Calu3 (cell line): ENCODE measurements at regions of chr12 and their contacts with region 1.

Region 1: DNA sequence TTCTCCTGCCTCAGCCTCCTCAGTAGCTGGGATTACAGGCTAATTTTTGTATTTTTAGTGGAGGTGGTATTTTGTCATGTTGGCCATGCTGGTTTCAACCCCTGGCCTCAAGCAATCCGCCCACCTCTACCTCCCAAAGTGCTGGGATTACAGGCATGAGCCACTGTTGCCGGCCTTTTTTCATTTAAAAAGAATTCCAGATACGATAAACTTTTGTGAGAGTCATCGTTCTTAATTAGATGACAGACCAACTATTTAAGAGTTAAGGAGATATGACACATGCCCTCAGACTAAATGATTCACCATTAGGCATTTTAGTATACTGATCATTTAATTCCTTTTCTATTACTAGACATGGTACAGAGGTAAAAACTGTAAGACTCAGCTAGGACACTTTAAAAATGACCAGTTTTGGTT is 2.3 kb downstream of the ANKRD13A start:
- DNase-seq: no peak
- H3K4me3 Mint-ChIP-seq: no peak overlapping the region
- H3K27ac Mint-ChIP-seq: no peak overlapping the region
- H3K4me1 Mint-ChIP-seq: peaks cover 26% of the 10 kb centered on the region
- H3K27me3 Mint-ChIP-seq: no peaks in the 10 kb centered on the region
- CTCF ChIP-seq: no peak

Region 2: DNA sequence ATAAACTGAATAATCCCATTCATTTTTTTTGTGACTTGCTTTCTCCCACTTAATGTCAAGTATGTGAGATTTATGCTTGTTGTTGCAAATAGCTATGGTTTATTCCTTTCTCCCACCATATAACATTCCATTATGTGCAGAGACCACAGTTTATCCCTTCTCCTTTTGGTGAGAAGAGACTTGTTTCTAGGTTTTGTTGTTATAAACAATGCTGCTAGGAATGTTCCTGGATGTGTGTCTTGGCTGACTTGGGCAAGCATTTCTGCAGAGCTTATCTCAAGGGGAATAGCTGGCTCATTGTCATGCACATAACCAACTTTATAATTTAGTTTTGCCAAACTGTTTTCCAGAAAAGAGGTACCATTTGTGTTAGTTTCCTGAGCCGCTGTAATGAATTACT is 788.7 kb after region 1 on chr12:
- CTCF ChIA-PET with region 1: no interaction called
- intact Hi-C with region 1: no loop called
- DNase-seq: no peak
- H3K4me3 Mint-ChIP-seq: no peak overlapping the region
- H3K27ac Mint-ChIP-seq: no peak overlapping the region
- H3K4me1 Mint-ChIP-seq: peaks cover 11% of the 10 kb centered on the region
- H3K27me3 Mint-ChIP-seq: no peaks in the 10 kb centered on the region
- CTCF ChIP-seq: no peak

Region 3: DNA sequence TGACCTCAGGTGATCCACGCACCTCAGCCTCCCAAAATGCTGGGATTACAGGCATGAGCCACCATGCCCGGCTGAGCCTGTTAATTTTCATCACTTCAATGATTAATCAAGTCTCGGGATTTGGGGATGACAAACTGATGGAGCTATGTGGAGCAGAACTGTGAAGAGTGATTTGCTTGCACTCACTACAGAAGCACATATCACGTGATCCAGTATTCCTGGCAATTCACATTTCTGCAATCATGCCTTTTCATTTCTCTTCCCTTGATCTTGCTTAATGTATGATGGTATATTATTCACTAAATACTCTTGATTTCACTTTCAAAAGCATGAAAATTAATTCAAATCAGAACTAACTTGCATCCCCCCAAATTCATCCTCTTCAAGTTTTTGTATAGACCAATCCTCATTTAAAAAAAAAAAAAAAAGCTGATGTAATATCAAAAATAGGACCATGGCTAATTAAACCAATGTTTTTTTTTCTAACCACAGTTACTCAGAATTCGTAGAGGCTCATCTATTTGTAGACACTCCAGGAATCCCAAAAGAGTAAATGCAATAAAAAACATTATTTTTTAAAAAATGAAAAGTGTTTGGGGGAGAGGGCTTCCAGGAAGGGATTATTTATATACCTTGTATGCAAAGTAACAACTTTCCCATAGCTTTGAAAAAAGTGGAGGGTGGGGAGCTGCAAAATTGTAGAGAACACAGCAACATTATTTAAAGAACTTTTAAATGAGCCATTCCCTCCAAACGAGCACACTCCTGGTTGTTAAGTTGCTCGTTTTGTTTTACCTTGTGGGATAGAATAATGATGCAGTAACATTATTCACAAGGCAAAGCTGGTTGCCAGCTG is 1604.6 kb after region 1 on chr12:
- CTCF ChIA-PET with region 1: interaction called, 12 read pairs
- intact Hi-C with region 1: no loop called
- DNase-seq: no peak
- H3K4me3 Mint-ChIP-seq: no peak overlapping the region
- H3K27ac Mint-ChIP-seq: no peak overlapping the region
- H3K4me1 Mint-ChIP-seq: no peaks in the 10 kb centered on the region
- H3K27me3 Mint-ChIP-seq: no peaks in the 10 kb centered on the region
- CTCF ChIP-seq: no peak